PC-9 (cell line): ENCODE measurements at regions of chr1 and their contacts with region 1.

Region 1: DNA sequence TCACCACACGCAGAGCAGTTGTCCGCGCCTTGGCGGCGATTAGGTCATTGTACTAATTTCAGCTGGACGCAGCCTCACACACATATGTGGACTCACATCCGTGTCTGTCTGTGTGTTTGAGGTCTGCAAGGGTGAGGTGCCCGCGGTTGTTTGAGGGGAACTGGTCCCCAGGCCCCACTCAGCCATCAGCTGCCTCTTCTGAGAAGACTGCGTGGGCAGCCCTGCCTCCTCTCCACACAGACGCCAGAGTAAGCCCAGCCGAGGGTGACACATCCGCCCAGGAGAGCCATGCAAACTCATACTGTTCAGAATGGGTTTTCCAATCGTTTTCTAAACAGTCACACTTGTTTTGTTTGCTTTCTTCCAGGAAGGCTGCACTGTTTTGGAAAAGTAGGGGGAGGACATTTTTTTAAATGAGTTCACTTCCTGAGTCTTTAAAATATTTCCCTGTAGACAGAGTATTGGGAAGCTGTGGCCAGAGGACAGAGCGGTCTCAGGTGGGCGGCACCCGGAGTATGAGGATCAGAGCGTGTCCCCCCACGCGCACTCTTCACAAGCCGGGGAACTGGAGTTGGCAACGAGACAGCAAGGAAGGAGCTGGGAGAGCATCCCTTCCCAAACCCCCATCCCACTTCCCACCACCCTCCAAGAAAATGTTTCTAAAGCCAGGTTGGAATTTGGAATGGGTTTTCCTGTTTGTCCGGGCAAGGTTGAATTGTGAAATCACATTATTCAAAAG is 53.3 kb downstream of the TOMM20 start:
- DNase-seq: peak; percentile 66 to 95
- H3K4me3 ChIP-seq: peak overlapping the region; percentile 61
- H3K27ac ChIP-seq: peak overlapping the region; percentile 100
- H3K4me1 ChIP-seq: peaks cover 94% of the 10 kb centered on the region
- H3K27me3 ChIP-seq: no peaks in the 10 kb centered on the region
- CTCF ChIP-seq: no peak

Region 2: DNA sequence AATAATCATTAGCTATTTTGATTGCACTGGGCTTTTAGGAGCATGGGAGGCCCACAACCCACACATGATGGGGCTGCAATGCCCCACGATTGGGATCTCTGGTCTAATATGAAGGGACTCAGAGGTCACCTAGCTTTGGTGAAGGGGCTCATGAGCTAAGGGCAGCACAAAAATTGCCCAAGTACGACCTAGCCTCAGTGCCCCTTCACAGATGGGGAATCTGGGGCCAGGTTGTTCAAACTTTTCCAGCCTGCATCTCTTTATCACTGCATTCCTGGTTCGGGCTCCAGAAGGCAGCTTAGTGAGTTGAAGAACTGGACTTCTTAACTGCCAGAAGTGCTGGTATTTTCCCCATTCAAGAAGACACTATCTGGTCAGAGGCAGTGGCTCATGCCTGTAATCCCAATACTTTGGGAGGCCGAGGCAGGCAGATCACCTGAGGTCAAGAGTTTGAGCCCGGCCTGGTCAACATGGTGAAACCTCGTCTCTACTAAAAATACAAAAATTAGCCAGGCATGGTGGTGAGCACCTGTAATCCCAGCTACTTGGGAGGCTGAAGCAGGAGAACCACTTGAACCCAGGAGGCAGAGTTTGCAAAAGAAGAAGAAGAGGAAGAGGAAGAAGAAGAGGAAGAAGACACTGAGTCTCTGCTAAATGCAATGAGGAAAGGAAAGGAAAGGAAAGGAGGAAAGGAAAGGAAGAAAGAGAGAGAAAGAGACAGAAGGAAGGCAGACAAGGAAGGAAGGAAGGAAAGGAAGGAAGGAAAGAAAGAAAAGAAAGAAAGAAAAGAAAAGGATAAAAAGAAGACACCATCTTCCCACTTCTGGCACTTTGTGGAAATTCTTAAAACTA is 206.8 kb before region 1 on chr1:
- CTCF ChIA-PET with region 1: no interaction called
- POLR2A ChIA-PET with region 1: interaction called, 14 read pairs
- intact Hi-C with region 1: no loop called
- DNase-seq: no peak
- H3K4me3 ChIP-seq: peak overlapping the region; percentile 94
- H3K27ac ChIP-seq: peak overlapping the region; percentile 98
- H3K4me1 ChIP-seq: peaks cover 68% of the 10 kb centered on the region
- H3K27me3 ChIP-seq: no peaks in the 10 kb centered on the region
- CTCF ChIP-seq: no peak

Region 3: GRCh38 chr1:234978397-234979295 is 96.7 kb before region 1 on chr1:
- CTCF ChIA-PET with region 1: no interaction called
- POLR2A ChIA-PET with region 1: interaction called, 6 read pairs
- intact Hi-C with region 1: loop called (anchors 1 kb)
- DNase-seq: peak; percentile 45 to 93
- H3K4me3 ChIP-seq: peak overlapping the region; percentile 30; the same call in 1 of the 2 replicates
- H3K27ac ChIP-seq: peak overlapping the region; percentile 99
- H3K4me1 ChIP-seq: peaks cover 99% of the 10 kb centered on the region
- H3K27me3 ChIP-seq: no peaks in the 10 kb centered on the region
- CTCF ChIP-seq: no peak

Region 4: GRCh38 chr1:235011599-235012435 is 63.5 kb before region 1 on chr1:
- CTCF ChIA-PET with region 1: no interaction called
- POLR2A ChIA-PET with region 1: interaction called, 14 read pairs
- intact Hi-C with region 1: loop called (anchors 1 kb)
- DNase-seq: peak; percentile 89 to 98
- H3K4me3 ChIP-seq: peak overlapping the region; percentile 28; the same call in 1 of the 2 replicates
- H3K27ac ChIP-seq: peak overlapping the region; percentile 98
- H3K4me1 ChIP-seq: peaks cover 35% of the 10 kb centered on the region
- H3K27me3 ChIP-seq: no peaks in the 10 kb centered on the region
- CTCF ChIP-seq: no peak

Region 5: GRCh38 chr1:235060607-235061470 is 14.5 kb before region 1 on chr1:
- CTCF ChIA-PET with region 1: interaction called, 3 read pairs
- POLR2A ChIA-PET with region 1: interaction called, 12 read pairs
- intact Hi-C with region 1: loop called (anchors 1 kb)
- DNase-seq: peak; percentile 88 to 99
- H3K4me3 ChIP-seq: peak overlapping the region; percentile 4; the same call in 1 of the 2 replicates
- H3K27ac ChIP-seq: peak overlapping the region; percentile 97
- H3K4me1 ChIP-seq: peaks cover 49% of the 10 kb centered on the region
- H3K27me3 ChIP-seq: no peaks in the 10 kb centered on the region
- CTCF ChIP-seq: no peak